Calu3 (cell line): ENCODE measurements at regions of chr5 and their contacts with region 1.

Region 1: DNA sequence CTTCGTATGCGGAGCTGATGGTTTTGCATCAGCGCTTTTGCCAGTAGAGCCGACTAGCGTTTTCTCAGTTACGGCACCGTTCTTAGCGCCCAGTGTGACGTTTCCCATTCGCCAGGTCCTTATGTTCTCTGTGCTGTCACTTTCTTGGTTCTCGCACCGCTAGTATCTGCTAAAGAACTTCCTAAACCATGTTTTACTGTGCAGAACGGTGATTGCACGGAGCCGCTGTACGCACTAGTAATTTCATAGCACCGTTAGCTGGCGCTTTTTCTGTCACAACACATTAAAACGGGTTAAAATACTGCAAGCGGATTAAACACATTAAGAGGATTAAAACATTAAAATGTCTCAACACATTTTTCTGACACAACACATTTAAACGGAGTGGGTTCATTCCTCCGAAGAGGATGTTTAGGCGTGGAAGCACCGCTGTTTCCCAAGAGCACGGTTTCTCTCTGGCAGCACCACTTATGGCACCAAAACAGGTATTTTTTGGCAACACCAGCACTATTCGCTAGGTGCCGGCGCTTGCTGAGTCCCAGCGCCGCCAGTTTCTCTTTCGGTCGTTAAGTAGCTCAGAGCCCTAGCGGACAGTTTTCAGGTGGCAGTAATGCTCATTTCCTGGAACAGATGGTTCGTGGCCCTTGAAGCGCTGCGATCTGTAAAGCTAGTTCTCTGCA is 20.4 kb downstream of the ANXA2R start:
- DNase-seq: peak; percentile 79
- H3K4me3 Mint-ChIP-seq: peak overlapping the region; percentile 78
- H3K27ac Mint-ChIP-seq: peak overlapping the region; percentile 70
- H3K4me1 Mint-ChIP-seq: peaks cover 23% of the 10 kb centered on the region
- H3K27me3 Mint-ChIP-seq: no peaks in the 10 kb centered on the region
- CTCF ChIP-seq: no peak

Region 2: DNA sequence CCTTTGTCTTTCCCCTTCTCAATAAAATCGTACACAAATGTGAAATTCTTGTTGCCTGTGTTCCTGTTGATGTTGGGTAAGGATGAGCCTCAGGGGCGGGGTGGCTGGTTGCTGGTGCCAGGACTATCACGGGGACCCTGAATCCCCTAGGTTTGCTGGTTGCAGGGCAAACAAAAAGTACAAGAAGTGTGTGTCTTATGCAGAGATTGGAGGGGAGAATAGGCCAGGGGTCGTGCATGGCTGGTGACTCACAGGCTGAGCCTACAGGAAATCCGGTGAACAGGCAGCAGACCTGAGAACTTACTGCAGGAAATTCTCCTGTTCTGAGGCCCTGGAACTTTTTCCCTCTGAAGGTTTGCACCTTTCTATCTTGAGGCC is 14.8 kb after region 1 on chr5:
- CTCF ChIA-PET with region 1: interaction called, 10 read pairs
- intact Hi-C with region 1: loop called (anchors 2 kb)
- DNase-seq: peak; percentile 62
- H3K4me3 Mint-ChIP-seq: peak overlapping the region; percentile 90
- H3K27ac Mint-ChIP-seq: peak overlapping the region; percentile 96
- H3K4me1 Mint-ChIP-seq: peaks cover 24% of the 10 kb centered on the region
- H3K27me3 Mint-ChIP-seq: no peaks in the 10 kb centered on the region
- CTCF ChIP-seq: no peak

Region 3: GRCh38 chr5:43049236-43049635 is 29.5 kb after region 1 on chr5:
- CTCF ChIA-PET with region 1: no interaction called
- intact Hi-C with region 1: no loop called
- DNase-seq: no peak
- H3K4me3 Mint-ChIP-seq: no peak overlapping the region
- H3K27ac Mint-ChIP-seq: no peak overlapping the region
- H3K4me1 Mint-ChIP-seq: peaks cover 32% of the 10 kb centered on the region
- H3K27me3 Mint-ChIP-seq: no peaks in the 10 kb centered on the region
- CTCF ChIP-seq: no peak